ENCODE measurements at regions of chr20 and their contacts with region 1.

Region 1: GRCh38 chr20:35146920-35147574 is at the start of gene EDEM2:
- DNase-seq: peak; percentile 91 to 92 (median 92)
- H3K4me3 ChIP-seq: peak within 1 kb of the TSS; percentile 95 to 96 (median 95)
- H3K4me3 Mint-ChIP-seq: peak within 1 kb of the TSS; percentile 95 to 96
- H3K27ac ChIP-seq: peak within 1 kb of the TSS; percentile 68 to 88
- H3K27ac Mint-ChIP-seq: peak within 1 kb of the TSS; percentile 86 to 96 (median 96)
- H3K4me1 ChIP-seq: peaks cover 41 to 46% of the 10 kb centered on the region in 2 donors
- H3K4me1 Mint-ChIP-seq: peaks cover 43% of the 10 kb centered on the region
- H3K27me3 ChIP-seq: no peaks in the 10 kb centered on the region
- H3K27me3 Mint-ChIP-seq: no peaks in the 10 kb centered on the region
- CTCF ChIP-seq: no peak
- polyA plus RNA-seq, gene EDEM2: 39.5 to 86.1 (median 75.6) TPM

Region 2: DNA sequence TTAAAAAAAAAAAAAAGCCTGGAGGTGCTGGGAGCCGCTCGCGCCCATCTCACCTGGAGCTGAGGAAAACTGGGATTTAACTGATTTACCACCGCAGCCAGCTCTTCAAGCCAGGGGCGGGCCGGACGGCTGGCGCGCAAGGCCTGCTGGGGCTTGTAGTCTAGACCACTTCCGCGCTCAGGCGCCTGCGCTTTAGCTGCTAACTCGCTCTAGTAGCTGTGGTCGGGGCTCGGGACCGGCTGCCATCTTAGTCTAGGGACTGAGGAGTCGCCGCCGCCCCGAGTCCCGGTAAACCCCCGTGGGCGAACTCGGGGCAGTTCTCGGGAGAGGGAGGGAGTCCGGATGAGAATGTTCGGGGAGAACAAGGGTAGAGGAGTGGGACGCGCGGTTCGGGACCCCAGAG is 784.0 kb before region 1 on chr20 and contains the start of gene ITCH:
- intact Hi-C with region 1: loop called in 1 of 2 experiments (anchors 5 kb)
- DNase-seq: peak; percentile 89 to 97 (median 91)
- H3K4me3 ChIP-seq: peak within 1 kb of the TSS; percentile 80 to 95 (median 91)
- H3K4me3 Mint-ChIP-seq: peak within 1 kb of the TSS; percentile 94 to 99
- H3K27ac ChIP-seq: peak within 1 kb of the TSS; percentile 79 to 92
- H3K27ac Mint-ChIP-seq: peak within 1 kb of the TSS; percentile 96 to 99 (median 99)
- H3K4me1 ChIP-seq: peaks cover 32 to 36% of the 10 kb centered on the region in 2 donors
- H3K4me1 Mint-ChIP-seq: peaks cover 40% of the 10 kb centered on the region
- H3K27me3 ChIP-seq: no peaks in the 10 kb centered on the region
- H3K27me3 Mint-ChIP-seq: peaks cover 0 to 3% (median 0%) of the 10 kb centered on the region in 3 donors
- CTCF ChIP-seq: no peak
- polyA plus RNA-seq, gene ITCH: 13.3 to 26.6 (median 19.9) TPM

Region 3: GRCh38 chr20:35092524-35093266 is 54.4 kb before region 1 on chr20 and contains the start of gene TRPC4AP:
- intact Hi-C with region 1: loop called (anchors 2 to 5 kb)
- DNase-seq: peak; percentile 86 to 89 (median 87)
- H3K4me3 ChIP-seq: peak within 1 kb of the TSS; percentile 90 to 95 (median 92)
- H3K4me3 Mint-ChIP-seq: peak within 1 kb of the TSS; percentile 91 to 94
- H3K27ac ChIP-seq: peak within 1 kb of the TSS; percentile 84 to 90
- H3K27ac Mint-ChIP-seq: peak within 1 kb of the TSS; percentile 94 to 99 (median 97)
- H3K4me1 ChIP-seq: peaks cover 43 to 56% of the 10 kb centered on the region in 2 donors
- H3K4me1 Mint-ChIP-seq: peaks cover 54% of the 10 kb centered on the region
- H3K27me3 ChIP-seq: no peaks in the 10 kb centered on the region
- H3K27me3 Mint-ChIP-seq: peaks cover 0 to 10% (median 1%) of the 10 kb centered on the region in 3 donors
- CTCF ChIP-seq: peak; percentile 98
- polyA plus RNA-seq, gene TRPC4AP: 80.8 to 98.4 (median 88.6) TPM

Region 4: DNA sequence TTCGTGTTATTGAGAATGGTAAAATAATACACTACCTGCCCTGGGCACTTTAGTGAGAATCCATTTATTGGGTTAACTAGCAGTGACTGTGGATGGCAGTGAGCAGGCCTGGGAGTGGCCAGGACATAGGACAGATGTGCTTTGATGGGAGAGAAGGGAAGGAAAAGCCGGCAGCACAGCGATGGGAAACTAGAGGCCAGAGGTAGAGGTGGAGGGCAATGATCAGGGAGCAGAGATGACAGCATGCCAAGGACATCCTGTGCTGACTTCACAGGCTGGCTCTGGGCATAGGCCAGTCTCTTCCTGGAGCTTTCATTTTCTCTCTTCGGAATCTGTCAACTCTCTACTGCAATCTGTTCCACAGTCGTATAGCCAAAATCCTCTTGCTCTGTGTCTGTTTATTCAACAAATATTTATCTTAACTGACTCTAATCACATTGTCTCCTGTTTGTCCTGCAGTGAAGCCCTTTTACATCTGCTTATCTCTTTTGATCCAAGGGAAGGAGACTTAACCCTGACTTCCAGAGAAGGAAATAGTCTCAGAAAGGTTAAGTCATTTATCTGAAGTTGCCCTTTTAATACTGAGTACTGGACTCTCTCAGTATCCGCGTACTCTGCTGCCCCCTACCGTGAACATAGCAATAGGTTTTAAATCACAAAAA is 61.0 kb after region 1 on chr20:
- intact Hi-C with region 1: loop called (anchors 2 to 5 kb)
- DNase-seq: peak; percentile 58 to 71 (median 66)
- H3K4me3 ChIP-seq: no peak overlapping the region
- H3K4me3 Mint-ChIP-seq: no peak overlapping the region
- H3K27ac ChIP-seq: no peak overlapping the region
- H3K27ac Mint-ChIP-seq: no peak overlapping the region
- H3K4me1 ChIP-seq: no peaks in the 10 kb centered on the region
- H3K4me1 Mint-ChIP-seq: no peaks in the 10 kb centered on the region
- H3K27me3 ChIP-seq: no peaks in the 10 kb centered on the region
- H3K27me3 Mint-ChIP-seq: peaks cover 0 to 4% (median 0%) of the 10 kb centered on the region in 3 donors
- CTCF ChIP-seq: peak; percentile 77

Region 5: DNA sequence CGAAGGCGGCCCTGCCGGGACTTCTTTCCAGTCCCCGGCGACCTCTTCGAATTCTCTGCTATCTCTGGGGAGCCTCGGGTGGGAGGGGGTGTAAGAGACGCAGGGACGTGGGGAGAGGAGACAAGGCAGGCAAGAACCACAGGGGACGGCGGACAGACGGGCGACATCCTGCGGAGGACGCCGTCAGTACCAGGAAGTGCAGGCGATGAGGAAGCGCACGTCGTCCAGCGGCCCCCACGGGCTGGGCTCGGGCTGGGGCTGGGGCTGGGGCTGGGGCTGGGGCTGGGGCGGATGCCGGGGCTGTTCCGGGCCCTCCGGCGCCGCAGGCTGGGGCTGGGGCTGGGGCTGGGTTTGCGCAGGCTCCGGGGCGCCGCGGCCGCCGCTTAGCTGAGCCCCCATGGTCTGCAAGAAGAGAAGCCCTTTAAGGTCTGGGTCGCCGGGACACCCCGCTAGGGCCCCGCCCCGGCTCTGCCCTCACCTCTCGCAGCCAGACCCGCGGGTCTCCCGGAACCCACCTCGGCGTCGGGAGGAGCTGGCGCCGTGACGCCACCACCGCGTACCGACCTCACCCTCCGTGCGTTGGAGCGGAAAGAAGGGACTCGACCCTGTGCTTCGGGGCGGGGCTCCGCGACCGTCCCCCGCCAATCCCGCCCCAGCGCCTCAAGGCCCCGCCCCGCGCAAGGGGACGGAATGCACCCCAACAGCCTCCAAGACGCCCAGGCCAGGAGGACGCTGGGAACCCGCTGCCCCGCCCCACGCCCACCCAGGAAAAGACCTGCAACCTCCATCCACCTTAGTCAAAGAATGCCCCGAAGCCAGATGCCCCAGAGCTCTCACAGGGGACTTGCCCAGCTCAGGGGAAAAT is 130.7 kb after region 1 on chr20 and contains the start of gene MMP24OS:
- intact Hi-C with region 1: loop called in 1 of 2 experiments (anchors 10 kb)
- DNase-seq: peak; percentile 83 to 87 (median 86)
- H3K4me3 ChIP-seq: peak within 1 kb of the TSS; percentile 65 to 94 (median 91)
- H3K4me3 Mint-ChIP-seq: peak within 1 kb of the TSS; percentile 95 to 97
- H3K27ac ChIP-seq: peak within 1 kb of the TSS; percentile 62 to 97
- H3K27ac Mint-ChIP-seq: peak within 1 kb of the TSS; percentile 95 to 99 (median 98)
- H3K4me1 ChIP-seq: peaks cover 14 to 22% of the 10 kb centered on the region in 2 donors
- H3K4me1 Mint-ChIP-seq: peaks cover 15% of the 10 kb centered on the region
- H3K27me3 ChIP-seq: no peaks in the 10 kb centered on the region
- H3K27me3 Mint-ChIP-seq: no peaks in the 10 kb centered on the region
- CTCF ChIP-seq: no peak
- polyA plus RNA-seq, gene MMP24OS: 9.5 to 43.9 (median 9.6) TPM